CD8-positive, alpha-beta T cell (primary cell): ENCODE measurements at regions of chr2 and their contacts with region 1.

Region 1: DNA sequence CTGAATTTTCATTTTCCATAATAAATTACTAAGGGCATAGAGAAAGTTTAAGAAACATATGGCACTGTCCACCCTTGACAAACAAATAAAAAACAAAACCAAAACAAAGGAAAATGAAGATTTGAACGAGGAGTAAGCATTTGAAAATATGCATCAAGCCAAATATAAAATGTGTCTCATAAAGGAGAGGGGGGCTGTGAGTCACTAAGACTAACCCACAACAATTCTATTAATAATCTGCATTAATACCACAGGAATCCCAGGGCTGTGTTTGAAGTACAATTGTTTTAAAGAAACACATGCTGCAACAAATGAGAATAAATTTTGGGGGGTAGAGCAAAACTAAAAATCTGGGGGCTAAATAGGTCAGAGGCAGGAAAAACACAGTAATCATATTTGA is 53.8 kb upstream of the STK17B start:
- DNase-seq: no peak
- ATAC-seq: no peak
- H3K4me3 ChIP-seq: no peak overlapping the region
- H3K4me3 Mint-ChIP-seq: peak overlapping the region; percentile 8
- H3K27ac ChIP-seq: no peak overlapping the region
- H3K27ac Mint-ChIP-seq: peak overlapping the region; percentile 25
- H3K4me1 ChIP-seq: peaks cover 61% of the 10 kb centered on the region
- H3K4me1 Mint-ChIP-seq: peaks cover 78% of the 10 kb centered on the region
- H3K27me3 ChIP-seq: no peaks in the 10 kb centered on the region
- H3K27me3 Mint-ChIP-seq: no peaks in the 10 kb centered on the region
- CTCF ChIP-seq: no peak

Region 2: GRCh38 chr2:196182439-196183171 is 42.6 kb before region 1 on chr2:
- CTCF ChIA-PET with region 1: interaction called, 11 read pairs
- POLR2A ChIA-PET with region 1: interaction called, 33 read pairs
- intact Hi-C with region 1: no loop called
- DNase-seq: peak in 2 of 9 experiments; percentile 60 to 77
- ATAC-seq: peak; percentile 22
- H3K4me3 ChIP-seq: no peak overlapping the region
- H3K4me3 Mint-ChIP-seq: peak overlapping the region; percentile 68
- H3K27ac ChIP-seq: peak overlapping the region; percentile 20 to 88
- H3K27ac Mint-ChIP-seq: peak overlapping the region; percentile 92
- H3K4me1 ChIP-seq: peaks cover 70% of the 10 kb centered on the region
- H3K4me1 Mint-ChIP-seq: peaks cover 88% of the 10 kb centered on the region
- H3K27me3 ChIP-seq: no peaks in the 10 kb centered on the region
- H3K27me3 Mint-ChIP-seq: no peaks in the 10 kb centered on the region
- CTCF ChIP-seq: no peak

Region 3: DNA sequence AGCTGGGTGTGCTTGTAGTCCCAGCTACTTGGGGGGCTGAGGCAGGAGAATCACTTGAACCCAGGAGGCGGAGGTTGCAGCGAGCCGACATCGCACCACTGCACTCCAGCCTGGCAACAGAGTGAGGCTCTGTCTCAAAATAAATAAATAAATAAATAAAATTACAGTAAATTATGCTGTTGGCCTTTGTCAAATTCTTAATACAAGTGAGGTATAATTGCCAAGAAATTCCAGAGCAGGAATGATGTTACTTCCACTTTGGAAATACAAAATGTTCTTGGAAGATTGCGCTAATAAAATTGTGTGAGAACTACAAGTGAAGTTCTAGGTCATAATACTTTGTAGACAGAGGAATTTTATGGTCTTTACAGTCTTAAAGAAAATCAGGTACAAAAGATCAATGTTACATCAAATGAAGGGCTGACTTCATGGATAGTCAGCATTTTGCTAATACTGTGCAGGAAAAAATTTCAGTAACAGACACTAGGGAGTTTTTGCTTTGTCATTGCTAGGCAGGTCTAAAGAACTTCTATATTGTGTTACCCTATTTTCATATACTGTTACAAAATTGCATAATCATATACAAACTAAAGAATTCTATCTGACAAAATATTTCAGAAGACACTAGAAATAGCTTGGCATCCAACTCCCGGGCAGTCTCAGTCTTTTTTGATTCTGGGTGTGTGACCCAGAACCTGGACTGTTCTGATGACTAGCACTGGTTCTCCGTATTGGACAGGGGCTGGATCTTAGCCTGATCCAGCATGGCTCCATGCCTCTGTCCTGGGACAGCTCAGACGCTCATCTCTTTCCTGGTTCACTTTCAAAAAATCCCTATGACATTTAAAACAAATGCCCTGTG is 22.1 kb after region 1 on chr2:
- CTCF ChIA-PET with region 1: interaction called, 36 read pairs
- POLR2A ChIA-PET with region 1: interaction called, 4 read pairs
- intact Hi-C with region 1: no loop called
- DNase-seq: no peak
- ATAC-seq: no peak
- H3K4me3 ChIP-seq: no peak overlapping the region
- H3K4me3 Mint-ChIP-seq: no peak overlapping the region
- H3K27ac ChIP-seq: no peak overlapping the region
- H3K27ac Mint-ChIP-seq: peak overlapping the region; percentile 69
- H3K4me1 ChIP-seq: peaks cover 48% of the 10 kb centered on the region
- H3K4me1 Mint-ChIP-seq: peaks cover 63% of the 10 kb centered on the region
- H3K27me3 ChIP-seq: no peaks in the 10 kb centered on the region
- H3K27me3 Mint-ChIP-seq: no peaks in the 10 kb centered on the region
- CTCF ChIP-seq: no peak

Region 4: GRCh38 chr2:196277002-196277401 is 51.8 kb after region 1 on chr2:
- CTCF ChIA-PET with region 1: interaction called, 34 read pairs
- POLR2A ChIA-PET with region 1: interaction called, 6 read pairs
- intact Hi-C with region 1: loop called (anchors 2 to 5 kb)
- DNase-seq: peak in 4 of 9 experiments; percentile 28 to 78 (median 56)
- ATAC-seq: peak; percentile 55
- H3K4me3 ChIP-seq: no peak overlapping the region
- H3K4me3 Mint-ChIP-seq: no peak overlapping the region
- H3K27ac ChIP-seq: no peak overlapping the region
- H3K27ac Mint-ChIP-seq: peak overlapping the region; percentile 72
- H3K4me1 ChIP-seq: peaks cover 38% of the 10 kb centered on the region
- H3K4me1 Mint-ChIP-seq: peaks cover 39% of the 10 kb centered on the region
- H3K27me3 ChIP-seq: no peaks in the 10 kb centered on the region
- H3K27me3 Mint-ChIP-seq: no peaks in the 10 kb centered on the region
- CTCF ChIP-seq: peak; percentile 85

Region 5: DNA sequence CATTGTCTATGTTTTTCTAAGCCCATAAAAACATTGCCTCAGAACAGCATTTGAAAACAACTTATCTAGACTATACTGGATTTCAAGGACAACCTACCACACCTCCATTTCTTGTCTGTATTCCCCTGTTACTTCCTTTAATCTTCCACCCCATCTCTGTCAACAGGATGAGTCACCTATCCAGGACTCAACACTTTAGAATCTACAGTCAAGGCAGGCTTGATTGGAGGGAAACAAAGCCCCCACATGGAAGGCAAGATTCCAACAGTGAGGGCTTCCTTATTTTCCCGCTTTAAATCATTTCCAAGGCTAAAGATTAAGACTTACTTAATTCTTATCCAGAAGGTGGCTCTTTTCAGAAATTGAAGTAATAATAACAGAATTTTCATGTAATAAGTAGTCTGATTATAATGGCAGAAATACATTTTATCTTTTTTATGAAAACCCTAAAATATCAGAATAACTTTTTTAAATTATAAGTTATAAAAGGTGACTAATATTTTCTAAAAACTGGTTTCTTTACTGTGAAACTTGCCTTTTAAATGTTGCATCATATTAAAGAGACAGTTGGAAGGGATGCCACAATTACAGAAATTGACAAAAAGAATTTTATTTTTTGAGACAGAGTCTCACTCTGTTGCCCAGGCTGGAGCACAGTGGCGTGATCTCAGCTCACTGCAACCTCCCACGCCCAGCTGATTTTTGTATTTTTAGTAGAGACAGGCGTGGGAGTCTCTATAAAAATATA is 275.6 kb after region 1 on chr2:
- CTCF ChIA-PET with region 1: no interaction called
- POLR2A ChIA-PET with region 1: no interaction called
- intact Hi-C with region 1: no loop called
- DNase-seq: no peak
- ATAC-seq: no peak
- H3K4me3 ChIP-seq: no peak overlapping the region
- H3K4me3 Mint-ChIP-seq: no peak overlapping the region
- H3K27ac ChIP-seq: no peak overlapping the region
- H3K27ac Mint-ChIP-seq: no peak overlapping the region
- H3K4me1 ChIP-seq: no peaks in the 10 kb centered on the region
- H3K4me1 Mint-ChIP-seq: no peaks in the 10 kb centered on the region
- H3K27me3 ChIP-seq: no peaks in the 10 kb centered on the region
- H3K27me3 Mint-ChIP-seq: peaks cover 13% of the 10 kb centered on the region
- CTCF ChIP-seq: no peak